ENCODE measurements at regions of chr19 and their contacts with region 1.

Region 1: DNA sequence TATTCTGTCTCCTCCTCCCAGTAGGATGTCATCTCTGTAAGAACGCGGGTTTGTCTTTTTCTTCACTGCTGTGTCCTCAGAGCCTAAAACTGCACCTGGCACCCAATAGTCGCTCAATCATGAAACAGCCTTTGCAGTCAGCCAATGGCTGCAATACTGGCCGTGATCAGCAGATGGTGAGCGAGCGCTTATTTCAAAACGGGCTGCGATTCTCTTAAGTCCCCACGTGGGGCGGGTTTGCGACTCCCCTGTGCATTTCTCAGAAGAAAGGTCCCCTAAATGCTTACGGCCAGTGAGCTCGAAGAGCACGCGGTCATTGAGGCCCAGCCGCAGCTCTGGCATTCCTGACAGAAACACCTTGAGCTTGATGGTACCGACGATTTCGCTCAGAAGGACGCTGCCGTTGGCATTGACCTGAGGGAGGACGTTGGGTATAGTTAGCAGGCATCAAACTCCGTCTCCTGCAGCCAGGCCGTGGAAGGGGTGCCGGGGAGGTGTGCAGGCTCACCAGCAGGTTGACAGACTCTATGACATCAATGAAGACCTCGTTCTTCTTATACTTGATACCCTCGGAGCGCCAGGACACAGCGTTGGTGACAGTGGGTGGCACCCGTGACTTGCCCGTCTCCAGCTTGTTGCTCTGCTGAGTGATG is 6.0 kb downstream of the AP1M2 start:
- DNase-seq: peak; percentile 97
- H3K4me3 Mint-ChIP-seq: no peak overlapping the region
- H3K27ac Mint-ChIP-seq: peak overlapping the region; percentile 30
- H3K4me1 Mint-ChIP-seq: peaks cover 8% of the 10 kb centered on the region
- H3K27me3 Mint-ChIP-seq: peaks cover 7% of the 10 kb centered on the region

Region 2: GRCh38 chr19:10644260-10645007 is 63.3 kb after region 1 on chr19:
- intact Hi-C with region 1: loop called (anchors 1 kb)
- DNase-seq: peak; percentile 94
- H3K4me3 Mint-ChIP-seq: no peak overlapping the region
- H3K27ac Mint-ChIP-seq: no peak overlapping the region
- H3K4me1 Mint-ChIP-seq: peaks cover 28% of the 10 kb centered on the region
- H3K27me3 Mint-ChIP-seq: no peaks in the 10 kb centered on the region

Region 3: GRCh38 chr19:10695401-10696398 is 114.6 kb after region 1 on chr19:
- intact Hi-C with region 1: loop called (anchors 1 kb)
- DNase-seq: peak; percentile 98
- H3K4me3 Mint-ChIP-seq: peak overlapping the region; percentile 85
- H3K27ac Mint-ChIP-seq: peak overlapping the region; percentile 75
- H3K4me1 Mint-ChIP-seq: peaks cover 18% of the 10 kb centered on the region
- H3K27me3 Mint-ChIP-seq: peaks cover 6% of the 10 kb centered on the region